Natural killer cell (primary cell): ENCODE measurements at regions of chr10 and their contacts with region 1.

Region 1: GRCh38 chr10:69506834-69507721 is 55.8 kb downstream of the TSPAN15 start:
- DNase-seq: peak in 1 of 2 donors; percentile 61
- ATAC-seq: no peak
- H3K4me3 ChIP-seq: no peak overlapping the region
- H3K4me3 Mint-ChIP-seq: peak overlapping the region; percentile 40
- H3K27ac ChIP-seq: no peak overlapping the region
- H3K27ac Mint-ChIP-seq: peak overlapping the region in 1 of 2 donors; percentile 74
- H3K4me1 ChIP-seq: peaks cover 7% of the 10 kb centered on the region
- H3K4me1 Mint-ChIP-seq: peaks cover 7 to 9% of the 10 kb centered on the region in 2 donors
- H3K27me3 ChIP-seq: no peaks in the 10 kb centered on the region
- H3K27me3 Mint-ChIP-seq: peaks cover 18 to 22% of the 10 kb centered on the region in 2 donors
- CTCF ChIP-seq: no peak

Region 2: DNA sequence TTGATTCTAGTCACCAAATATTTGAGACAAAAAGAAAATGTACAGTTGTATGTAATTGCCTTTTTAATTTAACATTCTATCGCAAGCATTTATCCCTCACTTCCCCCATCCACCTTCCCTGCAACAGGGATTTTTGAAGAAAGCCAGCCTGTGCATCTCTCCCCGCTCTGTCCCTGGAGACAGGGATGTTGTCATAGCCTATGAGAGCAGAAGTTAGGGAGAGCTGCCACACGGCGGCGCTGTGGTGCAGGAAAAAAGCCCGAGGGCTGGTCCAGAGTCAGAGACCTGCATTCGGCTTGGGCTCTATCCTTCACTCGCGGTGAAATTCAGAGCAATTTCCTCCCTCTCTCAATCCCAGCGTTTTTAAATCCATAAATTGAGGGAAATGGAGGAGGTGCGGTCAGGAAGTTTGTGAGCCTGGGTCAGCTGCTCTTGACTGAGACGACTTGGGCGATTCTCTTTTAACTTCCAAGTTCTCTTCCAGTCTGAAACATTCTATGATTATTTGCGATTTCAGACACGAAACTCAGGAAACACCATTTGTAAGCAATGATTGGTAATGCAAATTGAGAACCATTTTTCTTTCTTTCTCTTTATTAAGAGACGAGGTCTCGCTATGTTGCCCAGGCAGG is 269.4 kb before region 1 on chr10:
- intact Hi-C with region 1: loop called (anchors 5 kb)
- DNase-seq: peak; percentile 85 to 90
- ATAC-seq: peak; percentile 95 to 100 (median 100)
- H3K4me3 ChIP-seq: no peak overlapping the region
- H3K4me3 Mint-ChIP-seq: no peak overlapping the region
- H3K27ac ChIP-seq: no peak overlapping the region
- H3K27ac Mint-ChIP-seq: peak overlapping the region in 1 of 2 donors; percentile 14
- H3K4me1 ChIP-seq: peaks cover 17% of the 10 kb centered on the region
- H3K4me1 Mint-ChIP-seq: peaks cover 10 to 26% of the 10 kb centered on the region in 2 donors
- H3K27me3 ChIP-seq: no peaks in the 10 kb centered on the region
- H3K27me3 Mint-ChIP-seq: no peaks in the 10 kb centered on the region
- CTCF ChIP-seq: peak; percentile 98

Region 3: DNA sequence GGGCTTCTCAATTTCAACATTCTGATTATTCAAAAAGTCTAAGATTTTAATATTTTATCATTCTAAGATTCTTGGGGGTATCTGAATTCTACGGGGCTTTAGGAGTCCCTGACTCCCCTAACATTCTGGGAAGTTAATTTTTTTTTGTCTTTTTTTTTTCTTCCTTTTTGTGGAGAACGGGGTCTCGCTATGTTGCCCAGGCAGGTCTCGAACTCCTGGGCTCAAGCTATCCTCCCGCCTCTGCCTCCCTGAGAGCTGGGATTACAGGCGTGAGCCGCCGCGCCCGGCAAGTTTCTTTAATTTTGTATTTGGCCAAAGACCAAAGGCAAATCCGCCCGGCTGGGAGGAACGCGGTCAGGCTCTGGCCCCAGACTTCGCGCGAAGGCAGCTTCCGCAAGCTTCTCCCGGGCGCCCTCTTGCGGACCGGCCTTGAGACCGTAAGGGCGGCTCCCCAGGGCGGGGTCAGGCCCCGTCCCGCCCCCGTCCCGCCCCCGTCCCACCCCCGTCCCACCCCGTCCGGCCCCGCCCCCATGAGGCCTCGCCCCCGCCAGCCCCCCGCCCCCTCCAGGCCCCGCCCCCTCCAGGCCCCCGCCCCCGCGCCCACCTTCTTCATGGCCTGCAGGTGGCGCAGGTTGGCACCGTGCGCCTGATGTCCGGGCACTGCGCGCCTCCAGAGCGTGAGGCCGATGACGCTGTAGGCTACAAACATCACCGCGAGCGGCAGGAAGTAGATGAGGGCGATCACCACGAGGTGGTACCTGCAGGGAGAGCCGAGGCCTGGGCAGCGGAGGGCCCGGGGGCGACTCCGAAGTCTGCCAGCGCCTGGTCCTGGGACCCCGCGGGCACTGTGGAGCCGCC is 98.5 kb before region 1 on chr10:
- intact Hi-C with region 1: loop called (anchors 5 kb)
- DNase-seq: peak; percentile 90 to 97
- ATAC-seq: peak; percentile 91 to 96 (median 91)
- H3K4me3 ChIP-seq: peak overlapping the region; percentile 9
- H3K4me3 Mint-ChIP-seq: peak overlapping the region; percentile 82
- H3K27ac ChIP-seq: peak overlapping the region; percentile 84
- H3K27ac Mint-ChIP-seq: peak overlapping the region; percentile 83 to 91
- H3K4me1 ChIP-seq: peaks cover 21% of the 10 kb centered on the region
- H3K4me1 Mint-ChIP-seq: peaks cover 7 to 23% of the 10 kb centered on the region in 2 donors
- H3K27me3 ChIP-seq: no peaks in the 10 kb centered on the region
- H3K27me3 Mint-ChIP-seq: no peaks in the 10 kb centered on the region
- CTCF ChIP-seq: peak; percentile 80

Region 4: GRCh38 chr10:69425511-69426298 is 81.4 kb before region 1 on chr10:
- intact Hi-C with region 1: loop called (anchors 1 kb)
- DNase-seq: peak in 1 of 2 donors; percentile 82
- ATAC-seq: peak in 1 of 3 donors; percentile 35
- H3K4me3 ChIP-seq: no peak overlapping the region
- H3K4me3 Mint-ChIP-seq: no peak overlapping the region
- H3K27ac ChIP-seq: peak overlapping the region; percentile 5
- H3K27ac Mint-ChIP-seq: no peak overlapping the region
- H3K4me1 ChIP-seq: peaks cover 15% of the 10 kb centered on the region
- H3K4me1 Mint-ChIP-seq: peaks cover 0 to 16% of the 10 kb centered on the region in 2 donors
- H3K27me3 ChIP-seq: no peaks in the 10 kb centered on the region
- H3K27me3 Mint-ChIP-seq: peaks cover 0 to 9% of the 10 kb centered on the region in 2 donors
- CTCF ChIP-seq: no peak

Region 5: DNA sequence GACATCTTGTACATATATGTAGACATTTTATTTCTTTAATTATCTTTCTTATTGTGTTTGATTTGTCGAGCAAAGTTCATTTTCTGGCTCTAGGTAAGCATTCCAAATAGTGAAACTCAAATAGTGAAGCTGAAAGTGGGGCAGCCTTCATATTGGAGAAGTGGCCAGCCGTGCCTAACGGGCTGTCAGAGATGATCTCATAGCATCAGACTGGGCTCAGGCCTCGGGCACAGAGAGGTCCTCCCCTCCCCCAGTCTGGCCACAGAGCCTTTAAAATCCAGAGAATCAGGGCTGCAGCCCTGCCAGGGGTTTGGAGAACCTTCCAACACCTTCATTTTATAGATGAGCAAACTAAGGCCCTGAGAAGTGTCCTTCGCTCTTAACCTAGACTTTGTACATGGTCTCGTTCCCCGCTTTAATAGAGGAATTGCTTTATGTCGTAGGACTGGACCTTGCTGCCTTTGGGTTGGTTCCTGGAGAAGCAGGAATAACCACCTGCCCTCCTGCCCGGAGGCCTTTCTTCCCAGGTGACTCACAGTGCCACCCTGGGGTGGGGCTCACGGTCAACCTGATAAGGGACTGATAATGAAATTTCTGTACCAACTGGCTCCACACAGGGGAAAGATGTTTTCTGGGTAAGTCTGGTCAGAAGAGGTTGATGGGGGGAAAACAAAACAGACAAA is 48.5 kb before region 1 on chr10:
- intact Hi-C with region 1: loop called (anchors 2 kb)
- DNase-seq: no peak
- ATAC-seq: no peak
- H3K4me3 ChIP-seq: no peak overlapping the region
- H3K4me3 Mint-ChIP-seq: no peak overlapping the region
- H3K27ac ChIP-seq: no peak overlapping the region
- H3K27ac Mint-ChIP-seq: no peak overlapping the region
- H3K4me1 ChIP-seq: peaks cover 18% of the 10 kb centered on the region
- H3K4me1 Mint-ChIP-seq: peaks cover 0 to under 1% of the 10 kb centered on the region in 2 donors
- H3K27me3 ChIP-seq: no peaks in the 10 kb centered on the region
- H3K27me3 Mint-ChIP-seq: peaks cover 0 to 1% of the 10 kb centered on the region in 2 donors
- CTCF ChIP-seq: no peak